CD4-positive, alpha-beta memory T cell (primary cell): ENCODE measurements at regions of chr20 and their contacts with region 1.

Region 1: GRCh38 chr20:51541189-51542032 is 1.1 kb downstream of the NFATC2 start:
- DNase-seq: peak; percentile 88 to 98 (median 91)
- H3K4me3 ChIP-seq: peak overlapping the region; percentile 72 to 85
- H3K4me3 Mint-ChIP-seq: peak overlapping the region; percentile 95 to 99 (median 98)
- H3K27ac ChIP-seq: peak overlapping the region; percentile 98
- H3K27ac Mint-ChIP-seq: peak overlapping the region; percentile 97 to 100 (median 98)
- H3K4me1 ChIP-seq: peaks cover 55% of the 10 kb centered on the region
- H3K4me1 Mint-ChIP-seq: peaks cover 43 to 65% (median 52%) of the 10 kb centered on the region in 4 donors
- H3K27me3 ChIP-seq: no peaks in the 10 kb centered on the region
- H3K27me3 Mint-ChIP-seq: no peaks in the 10 kb centered on the region

Region 2: DNA sequence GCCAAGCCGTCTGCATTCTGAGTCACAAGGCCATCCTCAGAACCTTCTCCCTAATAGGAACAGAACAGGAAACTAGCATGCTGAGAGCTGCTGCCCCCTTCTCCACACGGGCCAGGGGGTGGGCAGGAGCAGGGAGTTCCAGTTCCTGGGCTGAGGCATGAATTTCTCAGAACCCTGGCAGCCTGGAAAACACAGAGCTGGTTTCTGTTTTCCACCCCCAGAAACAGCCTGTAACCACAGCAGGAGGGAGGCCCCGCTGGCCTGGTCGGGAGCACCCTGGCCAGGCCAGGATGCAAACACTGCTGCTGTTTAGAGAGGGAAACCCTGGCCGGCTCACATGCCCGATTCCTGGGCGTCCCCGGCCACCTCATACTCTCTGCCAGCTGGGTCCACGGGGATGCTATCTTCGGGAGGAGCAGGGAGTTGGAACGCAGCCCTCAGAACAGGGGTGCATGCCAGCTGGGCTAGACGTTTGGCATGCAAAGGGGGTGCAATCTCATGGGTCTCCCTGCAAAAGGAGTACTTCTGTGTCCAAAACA is 129.0 kb before region 1 on chr20:
- CTCF ChIA-PET with region 1: interaction called, 4 read pairs
- POLR2A ChIA-PET with region 1: interaction called, 29 read pairs
- intact Hi-C with region 1: no loop called
- DNase-seq: no peak
- H3K4me3 ChIP-seq: no peak overlapping the region
- H3K4me3 Mint-ChIP-seq: peak overlapping the region in 5 of 8 donors; percentile 10 to 64 (median 31)
- H3K27ac ChIP-seq: peak overlapping the region; percentile 32
- H3K27ac Mint-ChIP-seq: peak overlapping the region; percentile 48 to 87 (median 73)
- H3K4me1 ChIP-seq: peaks cover 94% of the 10 kb centered on the region
- H3K4me1 Mint-ChIP-seq: peaks cover 52 to 90% (median 69%) of the 10 kb centered on the region in 4 donors
- H3K27me3 ChIP-seq: no peaks in the 10 kb centered on the region
- H3K27me3 Mint-ChIP-seq: no peaks in the 10 kb centered on the region

Region 3: DNA sequence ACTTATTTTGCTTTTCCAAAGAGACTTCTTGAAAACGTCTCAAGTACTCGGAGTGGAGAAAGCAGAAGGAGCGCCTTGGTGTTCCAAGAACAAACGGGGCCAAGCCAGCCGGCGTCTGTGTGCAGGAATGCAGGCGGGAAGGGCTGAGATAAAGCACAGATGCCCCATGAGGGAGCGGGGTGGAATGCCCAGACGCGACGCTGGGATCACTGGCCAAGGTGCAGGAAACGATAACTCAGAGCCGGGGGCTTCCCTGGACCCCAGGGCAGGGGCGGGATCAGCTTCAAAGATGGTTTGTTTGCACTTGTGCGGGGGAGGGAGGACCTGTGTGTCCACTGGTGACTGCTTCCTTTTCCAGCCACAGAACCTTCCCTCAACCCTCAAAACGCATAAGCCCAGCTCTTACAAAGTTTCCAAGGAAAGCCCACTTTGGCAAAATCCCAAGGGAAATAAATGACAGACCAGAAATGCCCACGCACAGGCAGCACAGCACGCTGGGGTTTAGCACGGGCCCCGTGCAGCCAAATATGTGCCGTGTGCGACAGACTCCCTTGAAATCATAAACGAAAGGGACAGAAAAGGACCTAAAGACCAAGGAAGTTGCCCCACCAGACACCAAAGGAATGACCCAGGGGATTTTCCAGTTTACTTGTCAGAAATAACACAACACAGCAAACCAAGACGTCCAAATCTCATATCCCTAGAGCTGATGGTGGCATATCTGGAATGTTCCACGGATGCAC is 112.8 kb before region 1 on chr20:
- CTCF ChIA-PET with region 1: no interaction called
- POLR2A ChIA-PET with region 1: interaction called, 7 read pairs
- intact Hi-C with region 1: loop called (anchors 5 kb)
- DNase-seq: no peak
- H3K4me3 ChIP-seq: no peak overlapping the region
- H3K4me3 Mint-ChIP-seq: no peak overlapping the region
- H3K27ac ChIP-seq: no peak overlapping the region
- H3K27ac Mint-ChIP-seq: peak overlapping the region in 4 of 7 donors; percentile 54 to 87 (median 76)
- H3K4me1 ChIP-seq: peaks cover 84% of the 10 kb centered on the region
- H3K4me1 Mint-ChIP-seq: peaks cover 56 to 90% (median 74%) of the 10 kb centered on the region in 4 donors
- H3K27me3 ChIP-seq: no peaks in the 10 kb centered on the region
- H3K27me3 Mint-ChIP-seq: no peaks in the 10 kb centered on the region

Region 4: GRCh38 chr20:51492167-51493092 is 49.0 kb before region 1 on chr20:
- CTCF ChIA-PET with region 1: no interaction called
- POLR2A ChIA-PET with region 1: interaction called, 51 read pairs
- intact Hi-C with region 1: no loop called
- DNase-seq: no peak
- H3K4me3 ChIP-seq: no peak overlapping the region
- H3K4me3 Mint-ChIP-seq: peak overlapping the region in 5 of 8 donors; percentile 31 to 81 (median 35)
- H3K27ac ChIP-seq: peak overlapping the region; percentile 51
- H3K27ac Mint-ChIP-seq: peak overlapping the region in 6 of 7 donors; percentile 70 to 99 (median 81)
- H3K4me1 ChIP-seq: peaks cover 75% of the 10 kb centered on the region
- H3K4me1 Mint-ChIP-seq: peaks cover 66 to 97% (median 85%) of the 10 kb centered on the region in 4 donors
- H3K27me3 ChIP-seq: no peaks in the 10 kb centered on the region
- H3K27me3 Mint-ChIP-seq: no peaks in the 10 kb centered on the region

Region 5: GRCh38 chr20:51512645-51513044 is 28.8 kb before region 1 on chr20:
- CTCF ChIA-PET with region 1: interaction called, 12 read pairs
- POLR2A ChIA-PET with region 1: interaction called, 46 read pairs
- intact Hi-C with region 1: loop called (anchors 1 kb)
- DNase-seq: peak in 3 of 5 donors; percentile 35 to 50 (median 35)
- H3K4me3 ChIP-seq: no peak overlapping the region
- H3K4me3 Mint-ChIP-seq: peak overlapping the region; percentile 33 to 71 (median 56)
- H3K27ac ChIP-seq: peak overlapping the region; percentile 31
- H3K27ac Mint-ChIP-seq: peak overlapping the region; percentile 55 to 95 (median 85)
- H3K4me1 ChIP-seq: peaks cover 86% of the 10 kb centered on the region
- H3K4me1 Mint-ChIP-seq: peaks cover 63 to 91% (median 75%) of the 10 kb centered on the region in 4 donors
- H3K27me3 ChIP-seq: no peaks in the 10 kb centered on the region
- H3K27me3 Mint-ChIP-seq: no peaks in the 10 kb centered on the region

Region 6: GRCh38 chr20:51715163-51715860 is 173.9 kb after region 1 on chr20:
- CTCF ChIA-PET with region 1: no interaction called
- POLR2A ChIA-PET with region 1: no interaction called
- intact Hi-C with region 1: no loop called
- DNase-seq: no peak
- H3K4me3 ChIP-seq: no peak overlapping the region
- H3K4me3 Mint-ChIP-seq: no peak overlapping the region
- H3K27ac ChIP-seq: no peak overlapping the region
- H3K27ac Mint-ChIP-seq: no peak overlapping the region
- H3K4me1 ChIP-seq: no peaks in the 10 kb centered on the region
- H3K4me1 Mint-ChIP-seq: peaks cover 0 to 6% (median 4%) of the 10 kb centered on the region in 4 donors
- H3K27me3 ChIP-seq: no peaks in the 10 kb centered on the region
- H3K27me3 Mint-ChIP-seq: peaks cover 11 to 23% of the 10 kb centered on the region in 2 donors

Region 7: GRCh38 chr20:51860111-51860882 is 318.9 kb after region 1 on chr20:
- CTCF ChIA-PET with region 1: no interaction called
- POLR2A ChIA-PET with region 1: no interaction called
- intact Hi-C with region 1: no loop called
- DNase-seq: no peak
- H3K4me3 ChIP-seq: no peak overlapping the region
- H3K4me3 Mint-ChIP-seq: no peak overlapping the region
- H3K27ac ChIP-seq: no peak overlapping the region
- H3K27ac Mint-ChIP-seq: no peak overlapping the region
- H3K4me1 ChIP-seq: no peaks in the 10 kb centered on the region
- H3K4me1 Mint-ChIP-seq: no peaks in the 10 kb centered on the region
- H3K27me3 ChIP-seq: no peaks in the 10 kb centered on the region
- H3K27me3 Mint-ChIP-seq: peaks cover 23 to 24% of the 10 kb centered on the region in 2 donors